HepG2 (cell line): ENCODE measurements at regions of chr16 and their contacts with region 1.

Region 1: GRCh38 chr16:77236063-77236511 is 36.9 kb downstream of the SYCE1L start:
- DNase-seq: peak; percentile 80
- ATAC-seq: peak; percentile 98
- H3K4me3 ChIP-seq: no peak overlapping the region
- H3K27ac ChIP-seq: no peak overlapping the region
- H3K4me1 ChIP-seq: no peaks in the 10 kb centered on the region
- H3K27me3 ChIP-seq: peaks cover 0 to 41% of the 10 kb centered on the region in 2 experiments
- CTCF ChIP-seq: peak; percentile 100
- EP300 ChIP-seq: no peak
- POLR2A ChIP-seq: no peak
- RAD21 ChIP-seq: peak; percentile 100

Region 2: DNA sequence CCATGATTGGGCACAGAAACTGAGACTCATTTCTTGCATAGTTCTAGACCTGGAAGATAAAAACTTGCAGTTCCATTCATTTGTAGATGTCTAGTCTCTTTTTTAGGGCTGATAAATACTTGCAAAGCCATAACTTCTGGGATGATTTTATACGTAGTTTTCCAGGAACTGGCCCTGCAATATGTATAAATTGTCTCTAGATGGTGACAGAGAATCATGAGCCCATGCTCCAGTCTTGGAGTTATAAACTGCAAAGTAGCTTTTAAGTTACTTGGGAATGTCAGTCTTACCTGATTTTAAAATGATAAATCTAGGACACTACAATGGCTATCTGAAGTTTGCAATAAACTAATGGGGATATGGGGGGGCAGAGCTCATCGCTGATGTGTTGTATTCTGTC is 201.8 kb after region 1 on chr16:
- CTCF ChIA-PET with region 1: no interaction called
- POLR2A ChIA-PET with region 1: no interaction called
- in situ Hi-C with region 1: no loop called
- intact Hi-C with region 1: loop called (anchors 1 kb)
- DNase-seq: no peak
- ATAC-seq: no peak
- H3K4me3 ChIP-seq: no peak overlapping the region
- H3K27ac ChIP-seq: no peak overlapping the region
- H3K4me1 ChIP-seq: no peaks in the 10 kb centered on the region
- H3K27me3 ChIP-seq: peaks cover 5 to 37% of the 10 kb centered on the region in 2 experiments; a peak in 4 of 5 replicates
- CTCF ChIP-seq: 0 out of 2 replicates have a peak, but pooled peaks have one; percentile 9
- EP300 ChIP-seq: no peak
- POLR2A ChIP-seq: no peak
- RAD21 ChIP-seq: no peak

Region 3: GRCh38 chr16:77660311-77660710 is 424.2 kb after region 1 on chr16:
- CTCF ChIA-PET with region 1: interaction called, 23 read pairs
- POLR2A ChIA-PET with region 1: no interaction called
- in situ Hi-C with region 1: loop called (anchors 5 kb)
- intact Hi-C with region 1: loop called (anchors 1 kb)
- DNase-seq: peak; percentile 35
- ATAC-seq: peak; percentile 84
- H3K4me3 ChIP-seq: no peak overlapping the region
- H3K27ac ChIP-seq: no peak overlapping the region
- H3K4me1 ChIP-seq: no peaks in the 10 kb centered on the region
- H3K27me3 ChIP-seq: peaks cover 0 to 6% of the 10 kb centered on the region in 2 experiments; a peak in 1 of 5 replicates
- CTCF ChIP-seq: peak; percentile 63
- EP300 ChIP-seq: no peak
- POLR2A ChIP-seq: no peak
- RAD21 ChIP-seq: no peak

Region 4: GRCh38 chr16:78002915-78003538 is 766.9 kb after region 1 on chr16:
- CTCF ChIA-PET with region 1: no interaction called
- POLR2A ChIA-PET with region 1: no interaction called
- in situ Hi-C with region 1: no loop called
- intact Hi-C with region 1: loop called (anchors 10 kb)
- DNase-seq: peak; percentile 76
- ATAC-seq: peak; percentile 82
- H3K4me3 ChIP-seq: no peak overlapping the region
- H3K27ac ChIP-seq: no peak overlapping the region
- H3K4me1 ChIP-seq: peaks cover 22% of the 10 kb centered on the region
- H3K27me3 ChIP-seq: no peaks in the 10 kb centered on the region; a peak in 1 of 5 replicates
- CTCF ChIP-seq: peak; percentile 90
- EP300 ChIP-seq: no peak
- POLR2A ChIP-seq: no peak
- RAD21 ChIP-seq: peak; percentile 82